Natural killer cell (primary cell): ENCODE measurements at regions of chr9 and their contacts with region 1.

Region 1: DNA sequence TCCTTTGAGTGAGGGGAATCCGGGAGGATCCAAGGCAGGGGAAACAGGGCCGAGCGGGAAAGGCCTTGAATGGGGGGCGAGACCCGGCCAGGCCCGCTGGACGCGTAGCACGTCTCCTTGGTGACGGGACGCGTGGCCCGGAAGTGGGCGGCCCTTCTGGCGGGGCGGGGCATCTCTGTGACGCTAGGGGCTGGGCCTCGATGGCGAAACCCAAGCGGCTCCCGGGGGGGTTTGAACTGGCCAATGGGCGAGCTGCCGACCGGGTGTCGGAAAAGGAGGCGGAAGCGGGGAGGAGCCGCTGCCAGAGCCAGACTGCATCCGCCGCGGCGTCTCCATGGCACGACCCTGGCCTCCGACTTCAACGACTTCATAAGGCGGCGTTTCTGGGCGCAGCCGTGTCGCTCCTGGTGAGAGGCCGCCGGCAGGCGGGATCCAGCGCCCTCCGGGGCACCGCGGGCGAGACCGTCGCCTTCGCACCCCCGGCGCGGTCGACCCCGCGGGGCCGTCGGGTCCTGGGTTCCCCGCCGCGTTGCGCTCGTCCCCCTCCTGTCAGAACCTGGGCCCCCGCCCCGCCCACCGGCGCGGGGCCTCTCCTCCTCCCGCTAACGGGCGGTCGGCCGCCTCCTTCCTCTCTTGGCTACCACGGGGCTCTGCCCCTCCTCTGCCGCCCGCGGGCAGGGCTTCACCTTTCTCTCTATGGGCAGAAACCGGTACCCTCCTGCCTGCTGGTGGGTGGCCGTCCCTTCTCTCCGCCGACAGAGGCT is at the start of gene ODF2:
- DNase-seq: peak; percentile 98 to 99
- ATAC-seq: peak; percentile 86 to 96 (median 88)
- H3K4me3 ChIP-seq: peak within 1 kb of the TSS; percentile 73
- H3K4me3 Mint-ChIP-seq: peak within 1 kb of the TSS; percentile 98
- H3K27ac ChIP-seq: peak within 1 kb of the TSS; percentile 85
- H3K27ac Mint-ChIP-seq: peak within 1 kb of the TSS; percentile 90 to 92
- H3K4me1 ChIP-seq: peaks cover 13% of the 10 kb centered on the region
- H3K4me1 Mint-ChIP-seq: peaks cover 6 to 24% of the 10 kb centered on the region in 2 donors
- H3K27me3 ChIP-seq: no peaks in the 10 kb centered on the region
- H3K27me3 Mint-ChIP-seq: no peaks in the 10 kb centered on the region
- CTCF ChIP-seq: no peak
- total RNA-seq, gene ODF2: 36.4 to 44.4 (median 37.5) TPM

Region 2: GRCh38 chr9:128438343-128439109 is 17.5 kb before region 1 on chr9:
- intact Hi-C with region 1: loop called (anchors 2 kb)
- DNase-seq: peak; percentile 80 to 88
- ATAC-seq: peak; percentile 86 to 97 (median 96)
- H3K4me3 ChIP-seq: no peak overlapping the region
- H3K4me3 Mint-ChIP-seq: no peak overlapping the region
- H3K27ac ChIP-seq: peak overlapping the region; percentile 6
- H3K27ac Mint-ChIP-seq: peak overlapping the region in 1 of 2 donors; percentile 54
- H3K4me1 ChIP-seq: peaks cover 12% of the 10 kb centered on the region
- H3K4me1 Mint-ChIP-seq: peaks cover 5 to 11% of the 10 kb centered on the region in 2 donors
- H3K27me3 ChIP-seq: no peaks in the 10 kb centered on the region
- H3K27me3 Mint-ChIP-seq: no peaks in the 10 kb centered on the region
- CTCF ChIP-seq: peak; percentile 94

Region 3: DNA sequence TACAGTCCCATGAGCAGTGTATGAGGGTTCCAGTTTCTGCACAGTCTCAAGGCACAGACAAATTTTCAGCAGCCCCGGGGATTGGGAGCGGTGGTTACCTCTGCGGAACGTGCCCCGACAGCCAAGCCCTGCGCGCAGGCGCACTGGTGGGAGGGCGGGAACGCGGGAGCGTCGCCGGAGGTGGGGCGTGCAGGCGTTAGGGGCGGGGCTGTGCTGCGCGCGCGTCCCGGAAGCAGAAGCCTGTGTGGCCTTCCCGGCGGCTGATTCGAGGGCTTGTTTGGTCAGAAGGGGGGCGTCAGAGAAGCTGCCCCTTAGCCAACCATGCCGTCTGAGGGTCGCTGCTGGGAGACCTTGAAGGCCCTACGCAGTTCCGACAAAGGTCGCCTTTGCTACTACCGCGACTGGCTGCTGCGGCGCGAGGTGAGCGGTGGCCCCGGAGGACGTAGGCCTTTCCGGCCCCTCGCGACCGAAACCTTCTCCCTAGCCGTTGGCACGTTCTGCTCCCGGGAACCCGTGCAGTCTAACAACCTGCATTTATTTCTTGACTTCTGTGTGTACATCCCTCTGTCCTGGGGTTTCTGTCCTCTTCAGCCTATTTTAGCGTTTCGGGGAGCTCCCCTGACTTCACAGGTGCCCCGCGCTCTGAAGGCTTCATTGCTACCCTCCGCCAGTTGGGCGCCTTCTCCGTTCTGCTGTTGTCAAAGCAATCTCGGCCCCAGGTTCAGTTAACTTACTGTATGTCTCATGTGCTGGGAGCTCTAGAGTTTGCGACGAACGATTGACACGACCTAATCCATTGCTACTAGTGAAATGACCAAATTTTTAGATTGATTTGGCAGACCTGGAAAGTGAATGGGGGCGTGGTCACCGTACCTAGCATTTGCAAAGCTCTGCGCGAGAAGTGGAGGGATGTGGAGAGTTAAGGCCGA is 48.7 kb after region 1 on chr9 and contains the start of gene GLE1:
- intact Hi-C with region 1: loop called (anchors 2 kb)
- DNase-seq: peak; percentile 98 to 99
- ATAC-seq: peak; percentile 97 to 98 (median 97)
- H3K4me3 ChIP-seq: peak within 1 kb of the TSS; percentile 81
- H3K4me3 Mint-ChIP-seq: peak within 1 kb of the TSS; percentile 98
- H3K27ac ChIP-seq: peak within 1 kb of the TSS; percentile 79
- H3K27ac Mint-ChIP-seq: peak within 1 kb of the TSS; percentile 95
- H3K4me1 ChIP-seq: peaks cover 16% of the 10 kb centered on the region
- H3K4me1 Mint-ChIP-seq: peaks cover 29 to 40% of the 10 kb centered on the region in 2 donors
- H3K27me3 ChIP-seq: no peaks in the 10 kb centered on the region
- H3K27me3 Mint-ChIP-seq: no peaks in the 10 kb centered on the region
- CTCF ChIP-seq: no peak
- total RNA-seq, gene GLE1: 21.2 to 33.3 (median 23.3) TPM